ENCODE measurements at regions of chr6 and their contacts with region 1.

Region 1: DNA sequence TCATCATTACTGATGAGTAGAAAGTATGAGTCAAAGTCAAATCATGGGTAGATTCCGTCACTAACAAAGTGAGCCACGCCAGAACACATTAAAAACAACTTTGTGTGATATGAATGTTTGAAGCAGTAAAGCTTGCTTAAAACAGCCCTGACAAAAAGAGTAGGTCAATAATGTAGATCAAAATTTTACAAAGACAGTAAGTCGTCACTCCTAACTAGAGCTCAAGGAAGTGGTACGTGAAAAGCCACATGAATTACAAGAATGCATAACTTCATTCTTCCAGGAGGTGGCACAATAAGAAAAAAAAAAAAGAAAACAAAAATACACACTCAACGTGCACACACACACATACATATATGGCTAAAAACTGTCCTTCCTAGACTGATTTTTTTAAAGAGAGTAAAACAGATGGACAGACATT is 69.9 kb downstream of the HACE1 start:
- DNase-seq: peak in 3 of 9 experiments; percentile 19 to 70 (median 48)
- ATAC-seq: peak; percentile 95
- H3K4me3 ChIP-seq: no peak overlapping the region
- H3K4me3 Mint-ChIP-seq: peak overlapping the region; percentile 30
- H3K27ac ChIP-seq: no peak overlapping the region
- H3K27ac Mint-ChIP-seq: peak overlapping the region; percentile 64
- H3K4me1 ChIP-seq: peaks cover 13% of the 10 kb centered on the region
- H3K4me1 Mint-ChIP-seq: peaks cover 16% of the 10 kb centered on the region
- H3K27me3 ChIP-seq: no peaks in the 10 kb centered on the region
- H3K27me3 Mint-ChIP-seq: no peaks in the 10 kb centered on the region
- CTCF ChIP-seq: peak; percentile 61

Region 2: DNA sequence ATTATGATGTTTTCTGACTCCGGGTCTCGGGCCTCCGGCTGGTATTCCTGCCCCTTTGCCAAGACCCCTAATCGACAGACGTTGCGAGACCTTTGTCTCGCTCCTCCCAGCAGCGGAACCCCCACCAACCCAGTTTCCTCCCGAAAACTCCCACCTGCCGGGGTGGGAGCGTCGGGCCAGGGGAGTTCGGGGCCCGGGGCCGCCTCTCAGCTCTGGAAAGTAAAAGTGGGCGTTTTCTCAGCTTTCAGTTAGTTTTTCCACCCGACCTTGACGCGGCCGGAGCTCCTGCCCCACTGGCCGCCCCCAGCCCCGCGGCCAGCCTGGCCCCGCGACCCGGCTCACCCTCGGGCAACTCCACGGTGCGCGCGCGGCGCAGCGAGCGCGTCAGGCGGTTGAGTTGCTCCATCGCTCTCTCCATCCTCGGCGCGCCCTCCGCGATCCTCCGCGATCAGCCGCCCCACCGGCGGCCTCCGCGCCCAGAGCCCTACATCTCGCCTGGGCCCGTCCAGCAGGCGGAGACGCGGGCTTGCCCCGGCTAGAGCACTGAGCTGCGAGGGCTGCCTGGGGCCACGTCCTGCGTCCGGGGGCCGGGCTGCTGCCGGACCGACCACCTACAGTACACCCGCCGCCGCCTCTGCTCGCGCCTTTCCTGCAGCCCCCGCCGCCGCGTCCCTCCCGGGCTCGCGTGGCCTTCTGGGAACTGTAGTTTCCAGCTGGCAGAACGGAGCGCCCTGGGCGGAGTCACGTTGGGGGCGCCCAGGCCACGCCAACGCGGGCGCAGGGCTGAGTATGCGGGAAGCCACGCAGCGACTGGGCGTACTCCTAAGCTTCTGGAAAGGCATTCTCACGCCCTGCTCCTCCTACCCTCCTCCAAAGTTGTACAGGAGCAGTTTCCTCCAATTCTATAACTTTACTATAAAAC is 69.7 kb after region 1 on chr6 and contains the start of gene HACE1:
- CTCF ChIA-PET with region 1: interaction called, 4 read pairs
- POLR2A ChIA-PET with region 1: no interaction called
- intact Hi-C with region 1: loop called (anchors 5 kb)
- DNase-seq: peak; percentile 74 to 92 (median 89)
- ATAC-seq: peak; percentile 97
- H3K4me3 ChIP-seq: peak within 1 kb of the TSS; percentile 80 to 83
- H3K4me3 Mint-ChIP-seq: peak within 1 kb of the TSS; percentile 93
- H3K27ac ChIP-seq: peak within 1 kb of the TSS; percentile 26 to 56
- H3K27ac Mint-ChIP-seq: peak within 1 kb of the TSS; percentile 85
- H3K4me1 ChIP-seq: peaks cover 10% of the 10 kb centered on the region
- H3K4me1 Mint-ChIP-seq: peaks cover 17% of the 10 kb centered on the region
- H3K27me3 ChIP-seq: no peaks in the 10 kb centered on the region
- H3K27me3 Mint-ChIP-seq: peaks cover 10% of the 10 kb centered on the region
- CTCF ChIP-seq: no peak
- total RNA-seq, gene HACE1: 8.4 to 9.0 TPM

Region 3: DNA sequence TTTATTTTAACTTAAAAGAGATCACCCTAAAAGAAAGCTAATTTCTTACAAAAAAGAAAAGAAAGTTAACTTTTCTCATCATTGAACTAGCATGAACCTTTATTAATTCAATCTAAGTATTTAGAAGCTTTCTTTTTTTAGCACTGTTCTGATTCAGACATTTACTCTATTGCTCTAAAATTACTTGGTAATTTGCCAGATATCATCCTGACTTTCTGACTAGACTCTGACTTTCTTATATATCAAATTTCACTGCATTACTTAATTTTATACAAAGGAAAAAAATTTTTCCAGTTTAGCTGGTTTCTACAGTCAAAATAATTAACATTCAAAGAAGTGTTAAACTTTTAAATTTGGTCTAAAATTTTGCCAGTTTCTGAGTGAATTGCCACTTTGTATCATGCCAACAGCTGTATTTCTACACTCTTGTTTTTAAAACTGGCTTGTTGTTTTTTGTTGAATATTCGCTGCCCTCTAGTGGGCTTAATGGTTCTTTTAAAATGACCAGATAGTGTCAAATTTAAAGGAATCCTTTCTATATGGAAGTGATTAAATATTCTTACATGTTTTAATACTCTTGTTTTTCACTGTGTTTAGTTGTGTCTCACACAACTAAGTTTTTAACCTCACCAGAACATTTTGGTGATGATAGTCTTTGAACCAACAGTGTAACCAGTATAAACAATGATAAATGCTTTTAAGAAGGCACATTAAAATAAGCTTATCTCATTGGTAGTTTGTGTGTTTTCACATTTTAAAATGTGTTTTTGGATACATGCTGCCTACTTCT is 288.0 kb after region 1 on chr6:
- CTCF ChIA-PET with region 1: interaction called, 6 read pairs
- POLR2A ChIA-PET with region 1: no interaction called
- intact Hi-C with region 1: loop called (anchors 2 kb)
- DNase-seq: peak in 2 of 9 experiments; percentile 9 to 20
- ATAC-seq: no peak
- H3K4me3 ChIP-seq: no peak overlapping the region
- H3K4me3 Mint-ChIP-seq: no peak overlapping the region
- H3K27ac ChIP-seq: no peak overlapping the region
- H3K27ac Mint-ChIP-seq: no peak overlapping the region
- H3K4me1 ChIP-seq: no peaks in the 10 kb centered on the region
- H3K4me1 Mint-ChIP-seq: no peaks in the 10 kb centered on the region
- H3K27me3 ChIP-seq: no peaks in the 10 kb centered on the region
- H3K27me3 Mint-ChIP-seq: peaks cover 8% of the 10 kb centered on the region
- CTCF ChIP-seq: no peak

Region 4: GRCh38 chr6:105424175-105424783 is 634.5 kb after region 1 on chr6:
- CTCF ChIA-PET with region 1: no interaction called
- POLR2A ChIA-PET with region 1: no interaction called
- intact Hi-C with region 1: loop called in 1 of 2 experiments (anchors 5 kb)
- DNase-seq: peak; percentile 48 to 77 (median 68)
- ATAC-seq: peak; percentile 85
- H3K4me3 ChIP-seq: no peak overlapping the region
- H3K4me3 Mint-ChIP-seq: no peak overlapping the region
- H3K27ac ChIP-seq: no peak overlapping the region
- H3K27ac Mint-ChIP-seq: no peak overlapping the region
- H3K4me1 ChIP-seq: no peaks in the 10 kb centered on the region
- H3K4me1 Mint-ChIP-seq: no peaks in the 10 kb centered on the region
- H3K27me3 ChIP-seq: no peaks in the 10 kb centered on the region
- H3K27me3 Mint-ChIP-seq: peaks cover 5% of the 10 kb centered on the region
- CTCF ChIP-seq: peak; percentile 86

Measured in CD8-positive, alpha-beta T cell (primary cell).